ENCODE measurements at regions of chr16 and their contacts with region 1.

Region 1: GRCh38 chr16:49889725-49890394 is 33.9 kb upstream of the ZNF423 start:
- DNase-seq: no peak
- ATAC-seq: no peak
- H3K4me3 ChIP-seq: no peak overlapping the region
- H3K27ac ChIP-seq: no peak overlapping the region
- H3K4me1 ChIP-seq: no peaks in the 10 kb centered on the region
- H3K27me3 ChIP-seq: no peaks in the 10 kb centered on the region; the same call in 1 of the 2 replicates
- CTCF ChIP-seq: no peak

Region 2: GRCh38 chr16:50185005-50185505 is 295.2 kb after region 1 on chr16:
- CTCF ChIA-PET with region 1: no interaction called
- POLR2A ChIA-PET with region 1: interaction called, 10 read pairs
- in situ Hi-C with region 1: no loop called
- intact Hi-C with region 1: no loop called
- DNase-seq: no peak
- ATAC-seq: no peak
- H3K4me3 ChIP-seq: no peak overlapping the region
- H3K27ac ChIP-seq: no peak overlapping the region
- H3K4me1 ChIP-seq: 0 out of 2 replicates have a peak, but pooled peaks cover 3% of the 10 kb centered on the region
- H3K27me3 ChIP-seq: no peaks in the 10 kb centered on the region
- CTCF ChIP-seq: no peak

Measured in Panc1 (cell line).